GM18951 (cell line): ENCODE measurements at regions of chr2 and their contacts with region 1.

Region 1: GRCh38 chr2:179440642-179441251 is 176.1 kb upstream of the SESTD1 start:
- POLR2A ChIP-seq: no peak

Region 2: DNA sequence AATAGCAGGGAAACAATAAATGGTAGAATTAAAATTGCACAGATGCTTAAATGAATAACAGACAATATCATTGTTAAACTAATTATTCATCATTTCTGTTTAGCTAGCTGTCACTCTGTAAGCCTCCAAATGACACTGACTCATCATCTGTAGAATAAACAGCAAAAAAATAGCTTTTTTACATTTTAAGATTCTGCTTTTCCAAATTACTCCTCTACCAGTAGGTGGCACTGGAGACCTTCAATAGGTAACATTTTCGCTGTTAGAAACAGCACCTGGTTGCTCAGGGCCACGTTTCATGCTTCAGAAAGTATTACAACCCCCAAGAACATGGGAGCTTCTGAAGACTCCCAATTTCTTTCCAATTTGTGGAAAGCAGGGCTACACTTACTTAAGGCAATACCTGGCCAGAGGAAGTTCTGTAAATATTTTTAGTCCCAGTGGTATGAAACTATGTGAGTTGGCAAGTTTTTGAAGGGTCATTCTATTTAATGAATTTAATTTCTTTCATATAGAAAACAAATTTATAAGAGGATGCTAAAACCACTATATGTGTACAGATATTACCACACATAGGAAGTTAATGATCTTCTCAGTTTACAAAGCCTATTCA is 678.9 kb before region 1 on chr2:
- in situ Hi-C with region 1: loop called (anchors 25 kb)
- POLR2A ChIP-seq: no peak

Region 3: GRCh38 chr2:179218848-179219594 is 221.7 kb before region 1 on chr2:
- in situ Hi-C with region 1: loop called (anchors 25 kb)
- POLR2A ChIP-seq: no peak